ENCODE measurements at regions of chr2 and their contacts with region 1.

Region 1: GRCh38 chr2:98560256-98560771 is 48.0 kb downstream of the COA5 start:
- DNase-seq: no peak
- H3K4me3 ChIP-seq: no peak overlapping the region
- H3K27ac ChIP-seq: peak overlapping the region; percentile 64
- H3K4me1 ChIP-seq: peaks cover 74% of the 10 kb centered on the region
- CTCF ChIP-seq: no peak

Region 2: DNA sequence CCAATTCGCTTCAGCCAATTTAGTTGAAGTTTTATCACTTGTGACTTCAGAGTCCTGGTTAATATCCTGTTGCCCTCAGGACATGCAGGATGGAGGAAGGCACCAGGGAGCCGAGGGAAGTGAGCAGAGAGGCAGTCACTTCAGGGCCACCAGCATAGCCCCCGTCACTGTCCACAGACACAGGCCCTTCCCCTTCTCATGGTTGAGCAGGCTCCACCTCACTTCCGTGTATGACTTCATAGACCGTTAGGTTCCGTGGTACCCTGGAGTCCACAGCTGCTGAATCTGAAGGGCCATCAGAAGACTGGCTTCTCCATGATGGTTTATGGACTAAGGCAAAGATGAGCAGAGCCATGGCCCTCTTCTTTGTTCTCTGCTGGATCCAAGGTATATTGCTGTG is 890.9 kb before region 1 on chr2 and contains the start of gene C2orf92:
- CTCF ChIA-PET with region 1: no interaction called
- POLR2A ChIA-PET with region 1: no interaction called
- intact Hi-C with region 1: loop called (anchors 5 kb)
- DNase-seq: peak; percentile 39
- H3K4me3 ChIP-seq: no peak within 1 kb of the TSS
- H3K27ac ChIP-seq: no peak within 1 kb of the TSS
- H3K4me1 ChIP-seq: peaks cover 14% of the 10 kb centered on the region
- CTCF ChIP-seq: no peak
- total RNA-seq, gene C2orf92: 3.6 and 5.9 TPM in 2 replicates

Region 3: DNA sequence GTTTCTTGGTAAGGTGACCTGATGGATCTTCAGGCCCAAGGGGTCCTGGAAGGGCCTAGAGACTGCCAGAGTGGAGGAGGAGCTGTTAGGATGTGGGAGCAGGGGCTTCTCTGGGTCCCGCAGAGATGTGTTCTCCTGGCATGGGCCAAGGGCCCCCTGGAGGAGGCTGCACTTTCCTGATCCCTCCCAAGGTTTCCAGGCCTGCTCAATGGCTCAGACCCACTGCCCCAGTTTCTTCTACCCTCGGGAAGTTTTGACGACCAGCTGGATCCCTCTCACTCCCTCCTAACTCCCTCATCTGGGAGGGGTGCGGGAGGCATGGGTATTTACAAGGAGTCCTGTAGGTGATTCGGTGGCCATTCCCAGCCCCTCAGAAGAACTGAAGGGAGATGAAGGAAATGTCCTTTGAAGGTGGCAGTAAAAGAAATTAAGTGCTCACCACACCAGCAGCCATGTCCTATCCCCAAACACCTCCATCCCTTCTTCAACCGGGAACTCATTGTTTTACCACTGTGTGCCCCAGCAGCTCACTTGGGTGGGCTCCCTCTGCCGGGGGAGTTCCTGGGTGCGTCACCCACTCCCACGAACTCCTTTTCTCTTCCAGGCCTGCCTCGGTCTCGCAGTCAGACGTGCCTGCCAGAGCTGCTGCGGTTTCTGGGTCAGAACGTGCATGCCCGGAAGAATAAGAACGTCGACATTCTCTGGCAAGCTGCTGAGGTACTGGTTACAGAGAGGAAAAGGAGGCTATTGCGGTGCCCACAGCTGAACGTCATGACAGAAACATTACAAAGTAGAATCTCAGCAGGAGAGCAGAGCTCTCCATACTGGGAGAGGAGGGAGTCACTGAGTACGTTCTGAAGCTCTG is 12.1 kb after region 1 on chr2:
- CTCF ChIA-PET with region 1: interaction called, 14 read pairs
- POLR2A ChIA-PET with region 1: interaction called, 5 read pairs
- intact Hi-C with region 1: no loop called
- DNase-seq: no peak
- H3K4me3 ChIP-seq: no peak overlapping the region
- H3K27ac ChIP-seq: no peak overlapping the region
- H3K4me1 ChIP-seq: no peaks in the 10 kb centered on the region
- CTCF ChIP-seq: no peak

Region 4: DNA sequence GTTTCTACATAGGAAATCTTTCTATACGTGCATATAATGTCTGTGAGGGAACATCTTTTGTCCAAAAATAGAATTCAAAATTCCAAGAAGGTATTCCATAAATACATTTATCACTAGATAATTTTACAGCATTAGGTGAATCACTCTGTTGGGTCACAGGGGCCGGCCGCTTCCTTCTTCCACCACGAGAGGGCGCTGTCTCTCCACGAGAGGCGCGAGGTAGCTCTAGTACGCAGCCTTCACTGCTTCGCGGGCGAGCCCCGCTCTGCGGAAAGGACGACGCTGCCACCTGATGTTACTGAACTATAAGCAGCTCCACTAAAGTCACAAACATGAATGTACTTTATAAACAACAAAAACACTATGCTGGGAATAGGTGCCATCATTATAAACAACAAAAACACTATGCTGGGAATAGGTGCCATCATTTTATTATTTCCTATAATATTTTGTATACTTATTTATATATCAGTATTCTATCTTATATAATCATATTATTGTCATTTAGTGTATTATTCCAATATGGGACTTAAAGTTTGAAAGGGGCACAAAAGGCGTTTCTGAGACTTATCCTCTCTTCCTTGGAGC is 998.9 kb after region 1 on chr2:
- CTCF ChIA-PET with region 1: no interaction called
- POLR2A ChIA-PET with region 1: no interaction called
- intact Hi-C with region 1: no loop called
- DNase-seq: peak; percentile 83
- H3K4me3 ChIP-seq: no peak overlapping the region
- H3K27ac ChIP-seq: no peak overlapping the region
- H3K4me1 ChIP-seq: no peaks in the 10 kb centered on the region
- CTCF ChIP-seq: peak; percentile 100